Lower leg skin (tissue), 4 donors: ENCODE measurements at regions of chr6 and their contacts with region 1.

Region 1: DNA sequence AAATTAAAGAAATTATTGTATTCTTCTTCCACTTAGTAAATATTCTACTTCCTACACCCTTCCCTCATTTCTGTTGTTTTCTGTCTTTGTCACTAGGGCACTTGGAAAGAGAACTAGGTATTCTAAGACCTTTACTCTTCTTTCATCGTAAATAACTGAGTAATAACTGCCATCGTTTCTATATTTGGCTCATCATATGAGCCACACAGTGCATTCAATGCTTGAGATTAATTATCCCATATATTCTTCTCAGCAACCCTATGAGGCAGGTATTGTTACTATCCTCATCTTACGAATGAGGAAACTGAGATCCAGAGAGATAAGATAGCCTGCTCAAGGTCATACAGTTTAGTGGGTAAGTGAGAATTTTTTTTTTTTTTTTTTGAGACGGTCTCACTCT is 38.9 kb downstream of the LRP11 start:
- DNase-seq: no peak
- H3K4me3 ChIP-seq: no peak overlapping the region
- CTCF ChIP-seq: no peak
- POLR2A ChIP-seq: no peak

Region 2: GRCh38 chr6:149809798-149810197 is 15.5 kb before region 1 on chr6:
- intact Hi-C with region 1: loop called (anchors 2 kb)
- DNase-seq: no peak
- H3K4me3 ChIP-seq: no peak overlapping the region
- CTCF ChIP-seq: no peak
- POLR2A ChIP-seq: no peak